Activated B cell treated with CpG ODN at 0.5 μM for 24 hours (primary cell): ENCODE measurements at regions of chr12 and their contacts with region 1.

Region 1: GRCh38 chr12:15856097-15856982 is 25.8 kb upstream of the STRAP start:
- DNase-seq: no peak
- ATAC-seq: peak; percentile 45
- H3K4me3 Mint-ChIP-seq: no peak overlapping the region
- H3K27ac Mint-ChIP-seq: no peak overlapping the region
- H3K4me1 Mint-ChIP-seq: no peaks in the 10 kb centered on the region
- H3K27me3 Mint-ChIP-seq: no peaks in the 10 kb centered on the region
- CTCF ChIP-seq: peak; percentile 95

Region 2: GRCh38 chr12:15151161-15152120 is 704.9 kb before region 1 on chr12:
- CTCF ChIA-PET with region 1: no interaction called
- POLR2A ChIA-PET with region 1: no interaction called
- intact Hi-C with region 1: loop called (anchors 1 kb)
- DNase-seq: no peak
- ATAC-seq: no peak
- H3K4me3 Mint-ChIP-seq: no peak overlapping the region
- H3K27ac Mint-ChIP-seq: no peak overlapping the region
- H3K4me1 Mint-ChIP-seq: no peaks in the 10 kb centered on the region
- H3K27me3 Mint-ChIP-seq: no peaks in the 10 kb centered on the region
- CTCF ChIP-seq: no peak

Region 3: DNA sequence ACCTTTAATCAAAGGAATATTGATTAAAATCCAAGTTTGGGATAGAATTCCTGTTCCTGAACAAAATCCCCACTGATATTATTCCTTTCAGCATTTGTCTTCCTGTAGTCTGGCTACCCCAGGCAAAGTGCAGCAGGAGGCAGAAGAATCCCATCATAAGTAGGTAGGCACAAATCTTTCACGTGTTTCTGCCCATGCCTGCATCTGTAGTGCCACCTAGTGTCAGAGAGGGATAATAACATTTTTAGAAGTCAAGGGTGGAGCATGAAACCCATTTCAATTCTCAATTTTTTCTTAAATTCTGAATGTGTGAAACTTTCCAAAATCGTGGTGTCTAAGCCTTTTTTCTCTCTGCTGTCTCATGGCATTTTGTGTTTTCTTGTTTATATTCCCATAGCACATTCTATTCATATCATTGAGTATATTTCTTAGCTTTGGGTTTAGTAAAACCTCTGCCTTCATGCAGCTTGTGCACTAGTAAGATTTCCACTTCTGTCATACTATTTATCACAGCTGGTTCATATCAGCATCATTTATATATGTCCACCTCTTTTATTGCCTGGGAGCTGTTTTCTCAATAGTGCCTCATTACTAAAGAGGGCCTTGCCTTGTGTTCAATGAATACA is 587.3 kb before region 1 on chr12:
- CTCF ChIA-PET with region 1: no interaction called
- POLR2A ChIA-PET with region 1: no interaction called
- intact Hi-C with region 1: loop called (anchors 2 kb)
- DNase-seq: no peak
- ATAC-seq: peak; percentile 62
- H3K4me3 Mint-ChIP-seq: no peak overlapping the region
- H3K27ac Mint-ChIP-seq: no peak overlapping the region
- H3K4me1 Mint-ChIP-seq: no peaks in the 10 kb centered on the region
- H3K27me3 Mint-ChIP-seq: peaks cover 5% of the 10 kb centered on the region
- CTCF ChIP-seq: peak; percentile 76

Region 4: DNA sequence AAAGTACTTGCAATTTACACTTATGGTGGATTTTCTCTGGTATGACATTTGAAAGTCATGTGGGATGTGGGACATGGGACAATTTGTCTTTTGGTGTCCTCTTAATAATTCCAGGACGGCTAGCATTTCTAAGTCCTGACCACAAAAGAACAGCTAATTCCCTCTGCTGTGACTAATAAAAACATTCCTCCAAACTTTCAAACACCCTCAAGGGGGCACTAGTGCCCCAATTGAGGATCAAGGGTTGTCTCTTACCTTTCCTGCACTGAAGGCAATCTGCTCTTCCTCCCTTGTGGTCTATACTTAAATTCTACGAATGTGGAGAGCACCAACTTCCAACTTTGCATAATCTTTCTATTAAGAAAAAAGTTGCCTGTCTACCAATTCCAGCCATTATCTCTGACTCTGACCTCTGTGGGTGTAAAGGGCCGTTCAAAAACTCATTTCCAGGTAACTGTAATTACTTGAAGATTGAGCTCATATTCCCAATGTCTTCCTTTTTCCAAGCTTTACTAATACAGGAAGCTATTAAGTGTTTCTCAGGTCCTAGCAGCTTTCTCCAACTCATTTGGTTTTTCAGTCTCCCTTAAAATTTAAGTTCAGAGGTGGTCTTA is 323.9 kb before region 1 on chr12:
- CTCF ChIA-PET with region 1: interaction called, 21 read pairs
- POLR2A ChIA-PET with region 1: no interaction called
- intact Hi-C with region 1: loop called (anchors 1 kb)
- DNase-seq: no peak
- ATAC-seq: peak; percentile 85
- H3K4me3 Mint-ChIP-seq: no peak overlapping the region
- H3K27ac Mint-ChIP-seq: no peak overlapping the region
- H3K4me1 Mint-ChIP-seq: peaks cover 8% of the 10 kb centered on the region
- H3K27me3 Mint-ChIP-seq: no peaks in the 10 kb centered on the region
- CTCF ChIP-seq: peak; percentile 84

Region 5: GRCh38 chr12:15752785-15753184 is 103.6 kb before region 1 on chr12:
- CTCF ChIA-PET with region 1: no interaction called
- POLR2A ChIA-PET with region 1: no interaction called
- intact Hi-C with region 1: no loop called
- DNase-seq: no peak
- ATAC-seq: no peak
- H3K4me3 Mint-ChIP-seq: no peak overlapping the region
- H3K27ac Mint-ChIP-seq: no peak overlapping the region
- H3K4me1 Mint-ChIP-seq: no peaks in the 10 kb centered on the region
- H3K27me3 Mint-ChIP-seq: peaks cover 10% of the 10 kb centered on the region
- CTCF ChIP-seq: no peak

Region 6: GRCh38 chr12:15772405-15773018 is 83.8 kb before region 1 on chr12:
- CTCF ChIA-PET with region 1: interaction called, 3 read pairs
- POLR2A ChIA-PET with region 1: no interaction called
- intact Hi-C with region 1: loop called (anchors 1 kb)
- DNase-seq: no peak
- ATAC-seq: no peak
- H3K4me3 Mint-ChIP-seq: no peak overlapping the region
- H3K27ac Mint-ChIP-seq: no peak overlapping the region
- H3K4me1 Mint-ChIP-seq: no peaks in the 10 kb centered on the region
- H3K27me3 Mint-ChIP-seq: peaks cover 13% of the 10 kb centered on the region
- CTCF ChIP-seq: no peak